ENCODE measurements at regions of chr11 and their contacts with region 1.

Region 1: GRCh38 chr11:18540207-18541009 is 13.7 kb upstream of the TSG101 start:
- DNase-seq: no peak
- H3K4me3 Mint-ChIP-seq: no peak overlapping the region
- H3K27ac Mint-ChIP-seq: no peak overlapping the region
- H3K4me1 Mint-ChIP-seq: no peaks in the 10 kb centered on the region
- H3K27me3 Mint-ChIP-seq: no peaks in the 10 kb centered on the region

Region 2: DNA sequence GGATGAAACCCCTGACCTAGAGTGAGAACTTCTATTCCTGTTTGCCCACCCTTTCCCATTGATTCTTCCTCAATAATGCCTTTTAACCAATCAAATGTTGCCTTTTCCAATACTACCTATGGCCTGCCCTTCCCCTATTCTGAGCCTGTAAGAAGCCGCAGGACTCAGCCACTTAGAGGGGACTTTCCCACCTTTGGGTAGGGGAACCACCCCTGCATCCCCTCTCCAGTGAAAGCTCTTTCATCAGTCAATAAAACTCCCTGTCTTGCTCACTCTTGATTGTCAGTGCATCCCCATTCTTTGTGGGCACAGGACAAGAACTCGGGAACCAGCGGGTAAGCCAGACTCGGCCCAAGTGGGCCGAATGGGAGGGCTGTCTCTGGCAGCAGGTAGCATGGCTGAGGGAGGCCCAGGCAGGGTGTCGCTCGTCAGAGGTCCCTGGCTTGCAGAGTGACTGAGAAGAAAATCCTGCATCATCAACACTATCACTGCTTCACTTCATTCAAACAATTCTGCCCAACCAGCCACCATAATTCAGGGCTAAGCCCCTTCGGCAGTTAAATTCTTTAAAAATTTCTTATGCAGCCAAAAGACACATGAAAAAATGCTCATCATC is 54.4 kb before region 1 on chr11:
- CTCF ChIA-PET with region 1: no interaction called
- DNase-seq: no peak
- H3K4me3 Mint-ChIP-seq: no peak overlapping the region
- H3K27ac Mint-ChIP-seq: no peak overlapping the region
- H3K4me1 Mint-ChIP-seq: no peaks in the 10 kb centered on the region
- H3K27me3 Mint-ChIP-seq: no peaks in the 10 kb centered on the region

Region 3: GRCh38 chr11:18634140-18635032 is 94.0 kb after region 1 on chr11 and contains the start of gene SPTY2D1:
- CTCF ChIA-PET with region 1: interaction called, 10 read pairs
- DNase-seq: peak; percentile 99
- H3K4me3 Mint-ChIP-seq: peak within 1 kb of the TSS; percentile 99
- H3K27ac Mint-ChIP-seq: peak within 1 kb of the TSS; percentile 99
- H3K4me1 Mint-ChIP-seq: peaks cover 32% of the 10 kb centered on the region
- H3K27me3 Mint-ChIP-seq: peaks cover 1% of the 10 kb centered on the region

Region 4: DNA sequence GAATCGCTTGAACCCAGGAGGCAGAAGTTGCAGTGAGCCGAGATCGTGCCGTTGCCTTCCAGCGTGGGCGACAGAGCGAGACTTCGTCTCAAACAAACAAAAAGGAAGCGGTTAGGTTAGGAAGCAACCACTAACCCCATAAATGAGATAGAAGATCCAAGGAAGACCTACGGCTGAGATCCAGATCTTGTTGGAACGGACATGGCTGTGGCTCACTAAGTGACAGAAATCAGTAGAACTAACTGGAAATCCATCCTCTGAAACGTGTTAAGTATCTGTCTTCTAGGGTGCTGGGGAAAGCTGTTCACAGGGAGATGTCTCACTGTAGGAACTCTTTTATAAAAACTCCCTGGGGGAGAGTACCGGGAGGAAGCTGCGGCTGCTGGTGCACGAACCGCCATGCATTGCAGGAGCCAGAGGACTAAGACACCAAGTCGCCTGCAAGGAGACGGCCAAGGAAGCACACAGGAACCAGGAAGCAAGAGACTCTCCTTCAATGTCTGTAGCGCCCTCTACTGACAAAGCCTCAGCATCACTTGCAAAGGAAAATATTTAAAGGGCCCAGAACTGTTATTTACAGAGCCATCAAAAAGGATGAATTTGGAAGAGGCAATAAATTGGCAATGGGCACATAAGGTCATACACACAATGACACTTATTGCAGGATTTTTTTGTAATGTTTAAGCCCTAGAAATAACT is 110.6 kb after region 1 on chr11:
- CTCF ChIA-PET with region 1: interaction called, 84 read pairs
- DNase-seq: peak; percentile 63
- H3K4me3 Mint-ChIP-seq: no peak overlapping the region
- H3K27ac Mint-ChIP-seq: peak overlapping the region; percentile 34
- H3K4me1 Mint-ChIP-seq: peaks cover 10% of the 10 kb centered on the region
- H3K27me3 Mint-ChIP-seq: peaks cover 11% of the 10 kb centered on the region

Region 5: GRCh38 chr11:18731949-18732821 is 191.8 kb after region 1 on chr11:
- CTCF ChIA-PET with region 1: interaction called, 28 read pairs
- DNase-seq: peak; percentile 77
- H3K4me3 Mint-ChIP-seq: no peak overlapping the region
- H3K27ac Mint-ChIP-seq: no peak overlapping the region
- H3K4me1 Mint-ChIP-seq: peaks cover 3% of the 10 kb centered on the region
- H3K27me3 Mint-ChIP-seq: peaks cover 10% of the 10 kb centered on the region

Measured in activated naive CD4-positive, alpha-beta T cell treated with anti-CD3 and anti-CD28 coated beads, Interleukin-2, amount 10 ng/mL, durations not matched to agents 7 days and 5 days (primary cell).